Activated CD4-positive, alpha-beta T cell treated with anti-CD3 and anti-CD28 coated beads for 36 hours (primary cell): ENCODE measurements at regions of chr20 and their contacts with region 1.

Region 1: GRCh38 chr20:13771853-13772453 is 12.8 kb downstream of the ESF1 start:
- DNase-seq: no peak
- ATAC-seq: no peak
- H3K4me3 Mint-ChIP-seq: no peak overlapping the region
- H3K27ac Mint-ChIP-seq: no peak overlapping the region
- H3K4me1 Mint-ChIP-seq: peaks cover 12% of the 10 kb centered on the region
- H3K27me3 Mint-ChIP-seq: no peaks in the 10 kb centered on the region

Region 2: DNA sequence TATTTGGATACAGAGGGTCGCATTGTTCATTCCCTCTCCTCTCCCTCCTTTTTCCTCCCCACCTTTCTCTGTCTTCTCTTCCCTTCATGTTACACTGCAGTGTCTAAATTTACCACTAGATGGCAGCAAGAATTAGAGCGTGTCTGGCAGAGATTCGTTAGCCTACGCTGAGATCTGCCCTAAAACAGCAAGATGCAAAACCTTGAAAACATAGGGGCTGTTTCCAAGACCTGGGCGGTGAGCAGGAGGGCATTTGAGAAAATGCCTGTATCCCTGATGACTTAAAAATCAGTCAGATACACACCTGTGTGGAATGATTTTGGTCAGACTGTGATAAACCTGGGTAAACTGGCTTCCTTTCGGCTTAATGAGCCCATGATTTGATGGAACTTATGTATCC is 652.4 kb before region 1 on chr20:
- CTCF ChIA-PET with region 1: interaction called, 6 read pairs
- POLR2A ChIA-PET with region 1: no interaction called
- intact Hi-C with region 1: loop called in 1 of 2 experiments (anchors 5 kb)
- DNase-seq: peak; percentile 30
- ATAC-seq: peak; percentile 71
- H3K4me3 Mint-ChIP-seq: no peak overlapping the region
- H3K27ac Mint-ChIP-seq: no peak overlapping the region
- H3K4me1 Mint-ChIP-seq: no peaks in the 10 kb centered on the region
- H3K27me3 Mint-ChIP-seq: no peaks in the 10 kb centered on the region

Region 3: GRCh38 chr20:13458860-13459451 is 313.0 kb before region 1 on chr20:
- CTCF ChIA-PET with region 1: no interaction called
- POLR2A ChIA-PET with region 1: no interaction called
- intact Hi-C with region 1: loop called in 1 of 2 experiments (anchors 1 kb)
- DNase-seq: peak; percentile 22
- ATAC-seq: peak; percentile 63
- H3K4me3 Mint-ChIP-seq: no peak overlapping the region
- H3K27ac Mint-ChIP-seq: no peak overlapping the region
- H3K4me1 Mint-ChIP-seq: no peaks in the 10 kb centered on the region
- H3K27me3 Mint-ChIP-seq: no peaks in the 10 kb centered on the region

Region 4: DNA sequence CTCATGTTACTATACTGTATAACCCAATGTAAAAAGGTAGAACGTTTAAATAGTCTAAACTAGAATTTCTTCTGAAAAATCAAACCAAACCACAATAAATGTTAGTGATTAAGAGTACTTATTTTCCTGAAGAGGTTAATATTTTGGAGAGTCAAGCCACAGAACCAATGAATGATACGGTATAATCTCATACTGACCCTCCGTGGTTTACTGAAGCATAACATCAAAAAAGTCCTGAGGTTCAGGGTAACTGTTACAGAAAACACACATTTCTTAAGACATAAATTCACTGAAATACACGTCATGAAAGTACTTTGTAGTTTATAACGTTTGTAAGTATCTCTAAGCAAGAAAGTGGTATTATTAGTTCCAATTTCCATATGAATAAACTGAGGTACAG is 16.1 kb before region 1 on chr20:
- CTCF ChIA-PET with region 1: interaction called, 12 read pairs
- POLR2A ChIA-PET with region 1: no interaction called
- intact Hi-C with region 1: no loop called
- DNase-seq: no peak
- ATAC-seq: no peak
- H3K4me3 Mint-ChIP-seq: no peak overlapping the region
- H3K27ac Mint-ChIP-seq: no peak overlapping the region
- H3K4me1 Mint-ChIP-seq: no peaks in the 10 kb centered on the region
- H3K27me3 Mint-ChIP-seq: no peaks in the 10 kb centered on the region

Region 5: DNA sequence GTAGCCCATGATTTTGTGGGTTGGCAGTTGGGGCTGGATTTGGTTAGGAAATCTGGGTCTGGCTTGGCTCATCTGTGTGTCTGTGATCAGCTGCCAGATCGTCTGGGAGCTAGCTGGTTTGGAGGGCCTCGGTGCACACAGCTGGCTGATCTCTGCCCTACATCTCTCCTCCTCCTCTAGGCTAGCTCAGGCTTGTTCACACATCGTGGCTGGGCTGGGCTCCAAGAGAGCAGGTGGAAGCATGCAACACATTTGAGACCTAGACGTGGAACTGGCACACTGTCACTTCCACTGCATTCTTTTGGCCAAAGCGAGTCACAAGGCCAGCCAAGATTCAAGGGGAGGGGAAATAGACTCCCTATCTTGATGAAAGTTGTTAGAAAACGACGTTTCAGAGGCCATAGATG is 28.8 kb after region 1 on chr20:
- CTCF ChIA-PET with region 1: interaction called, 12 read pairs
- POLR2A ChIA-PET with region 1: no interaction called
- intact Hi-C with region 1: no loop called
- DNase-seq: no peak
- ATAC-seq: no peak
- H3K4me3 Mint-ChIP-seq: no peak overlapping the region
- H3K27ac Mint-ChIP-seq: peak overlapping the region; percentile 10
- H3K4me1 Mint-ChIP-seq: no peaks in the 10 kb centered on the region
- H3K27me3 Mint-ChIP-seq: no peaks in the 10 kb centered on the region